Activated B cell treated with CpG ODN at 0.5 μM for 24 hours (primary cell): ENCODE measurements at regions of chr12 and their contacts with region 1.

Region 1: GRCh38 chr12:108803428-108804105 is 53.8 kb downstream of the SSH1 start:
- DNase-seq: no peak
- ATAC-seq: peak; percentile 87
- H3K4me3 Mint-ChIP-seq: no peak overlapping the region
- H3K27ac Mint-ChIP-seq: peak overlapping the region; percentile 56
- H3K4me1 Mint-ChIP-seq: peaks cover 21% of the 10 kb centered on the region
- H3K27me3 Mint-ChIP-seq: no peaks in the 10 kb centered on the region
- CTCF ChIP-seq: peak; percentile 93

Region 2: GRCh38 chr12:107670999-107671643 is 1132.4 kb before region 1 on chr12:
- CTCF ChIA-PET with region 1: no interaction called
- POLR2A ChIA-PET with region 1: no interaction called
- intact Hi-C with region 1: loop called (anchors 10 kb)
- DNase-seq: no peak
- ATAC-seq: no peak
- H3K4me3 Mint-ChIP-seq: no peak overlapping the region
- H3K27ac Mint-ChIP-seq: no peak overlapping the region
- H3K4me1 Mint-ChIP-seq: no peaks in the 10 kb centered on the region
- H3K27me3 Mint-ChIP-seq: peaks cover 23% of the 10 kb centered on the region
- CTCF ChIP-seq: no peak

Region 3: DNA sequence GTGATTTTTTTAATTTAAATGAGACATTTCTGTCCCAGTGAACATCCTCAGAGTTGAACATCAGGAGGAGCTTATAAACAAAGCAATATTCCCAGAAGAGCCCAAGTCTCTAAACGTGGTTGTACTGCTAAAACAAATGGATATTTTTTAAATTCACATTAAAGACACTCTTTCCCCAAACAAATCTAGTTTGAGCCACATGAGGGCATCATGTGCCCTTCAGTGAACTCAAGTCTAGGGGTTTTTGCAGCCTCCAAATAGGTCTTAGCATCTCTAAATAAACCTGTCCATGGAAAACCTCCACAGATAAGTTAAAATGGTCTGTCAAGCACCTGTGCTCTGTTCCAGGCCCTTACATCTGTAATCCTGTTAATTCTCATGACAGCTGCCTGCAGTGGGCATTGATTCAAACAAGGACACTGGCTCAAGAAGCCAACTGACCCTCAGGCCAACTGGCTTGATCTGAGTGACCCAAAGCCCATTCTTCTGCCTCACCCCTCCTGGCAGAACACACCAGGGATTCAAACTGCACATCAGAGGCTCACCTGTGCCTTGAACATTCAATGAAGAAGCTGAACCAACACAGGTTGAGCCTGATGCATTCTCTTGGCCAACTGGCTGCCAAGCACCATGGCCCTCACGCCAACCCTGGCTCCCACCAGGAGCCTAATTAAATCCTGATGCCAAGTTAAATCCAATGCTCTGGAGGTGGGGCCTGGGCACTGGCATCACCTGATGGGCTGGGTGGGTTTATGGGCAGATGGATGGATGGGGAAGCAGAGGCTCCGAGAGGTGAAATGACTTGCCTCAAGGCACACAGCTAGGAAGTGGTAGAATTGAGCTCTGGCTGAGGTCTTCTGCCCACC is 232.6 kb before region 1 on chr12:
- CTCF ChIA-PET with region 1: interaction called, 68 read pairs
- POLR2A ChIA-PET with region 1: interaction called, 3 read pairs
- intact Hi-C with region 1: loop called (anchors 1 kb)
- DNase-seq: no peak
- ATAC-seq: no peak
- H3K4me3 Mint-ChIP-seq: no peak overlapping the region
- H3K27ac Mint-ChIP-seq: peak overlapping the region; percentile 97
- H3K4me1 Mint-ChIP-seq: peaks cover 87% of the 10 kb centered on the region
- H3K27me3 Mint-ChIP-seq: no peaks in the 10 kb centered on the region
- CTCF ChIP-seq: no peak

Region 4: GRCh38 chr12:108618079-108618952 is 185.3 kb before region 1 on chr12:
- CTCF ChIA-PET with region 1: interaction called, 13 read pairs
- POLR2A ChIA-PET with region 1: no interaction called
- intact Hi-C with region 1: no loop called
- DNase-seq: peak; percentile 76
- ATAC-seq: peak; percentile 40
- H3K4me3 Mint-ChIP-seq: peak overlapping the region; percentile 19
- H3K27ac Mint-ChIP-seq: peak overlapping the region; percentile 53
- H3K4me1 Mint-ChIP-seq: peaks cover 70% of the 10 kb centered on the region
- H3K27me3 Mint-ChIP-seq: no peaks in the 10 kb centered on the region
- CTCF ChIP-seq: peak; percentile 60

Region 5: DNA sequence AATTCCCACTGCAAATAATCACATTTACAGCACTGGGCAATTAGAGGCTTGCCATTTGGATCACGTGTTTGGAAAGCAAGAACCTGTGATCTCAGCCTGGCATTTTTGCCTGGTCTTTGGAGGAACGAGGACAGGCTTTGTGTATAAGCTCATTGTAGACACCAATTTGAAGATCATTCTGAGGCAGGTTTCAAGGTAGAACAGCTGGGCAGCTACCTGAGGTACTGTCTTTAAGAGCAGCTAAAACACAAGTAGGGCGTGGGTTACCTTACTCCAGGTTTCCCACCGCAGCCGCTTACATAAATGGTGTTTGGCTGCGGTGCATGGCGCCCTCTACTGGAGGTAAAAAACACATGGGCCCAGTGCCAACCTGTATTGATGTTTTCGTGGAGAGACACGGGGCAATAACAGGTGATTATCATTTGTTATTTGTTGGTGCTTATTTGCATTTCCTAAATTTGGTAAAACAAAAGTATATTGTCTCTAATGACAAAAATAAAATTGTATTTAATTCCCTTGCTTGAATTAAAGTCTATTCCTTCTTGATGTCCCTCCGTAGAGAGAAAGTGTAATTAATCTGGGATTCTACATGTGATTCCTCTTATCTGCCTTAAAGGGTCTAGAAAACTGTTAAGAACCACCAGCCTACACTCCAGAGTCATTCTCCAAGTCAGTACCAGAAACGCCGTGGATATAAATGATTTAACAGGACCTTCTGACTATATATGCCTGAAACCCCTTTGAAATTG is 147.6 kb after region 1 on chr12:
- CTCF ChIA-PET with region 1: interaction called, 12 read pairs
- POLR2A ChIA-PET with region 1: no interaction called
- intact Hi-C with region 1: loop called (anchors 1 kb)
- DNase-seq: peak; percentile 46
- ATAC-seq: peak; percentile 82
- H3K4me3 Mint-ChIP-seq: no peak overlapping the region
- H3K27ac Mint-ChIP-seq: no peak overlapping the region
- H3K4me1 Mint-ChIP-seq: peaks cover 7% of the 10 kb centered on the region
- H3K27me3 Mint-ChIP-seq: peaks cover 8% of the 10 kb centered on the region
- CTCF ChIP-seq: peak; percentile 97